ENCODE measurements at regions of chrX and their contacts with region 1.

Region 1: DNA sequence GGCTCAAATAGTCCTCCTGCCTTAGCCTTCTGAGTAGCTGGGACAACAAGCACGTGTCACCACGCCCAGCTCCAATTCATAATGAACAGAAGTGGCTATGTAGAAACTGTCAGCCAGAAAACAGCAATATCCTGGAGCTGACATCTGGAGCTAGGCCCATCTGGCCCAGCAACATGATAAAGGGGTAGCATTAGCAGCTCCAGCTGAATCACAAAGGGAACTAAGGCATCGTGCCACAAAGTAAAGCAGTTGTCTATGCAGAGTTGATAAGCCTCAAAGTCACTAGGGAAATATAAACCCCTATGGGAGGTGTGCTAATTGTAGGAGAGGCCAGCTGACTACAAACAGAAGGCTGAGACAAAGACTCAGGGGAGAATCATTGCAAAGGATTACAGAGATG is 270.5 kb upstream of the GPC4 start:
- DNase-seq: no peak
- H3K4me3 ChIP-seq: no peak overlapping the region
- H3K27ac ChIP-seq: no peak overlapping the region
- H3K4me1 ChIP-seq: no peaks in the 10 kb centered on the region
- H3K27me3 ChIP-seq: no peaks in the 10 kb centered on the region
- CTCF ChIP-seq: no peak

Region 2: DNA sequence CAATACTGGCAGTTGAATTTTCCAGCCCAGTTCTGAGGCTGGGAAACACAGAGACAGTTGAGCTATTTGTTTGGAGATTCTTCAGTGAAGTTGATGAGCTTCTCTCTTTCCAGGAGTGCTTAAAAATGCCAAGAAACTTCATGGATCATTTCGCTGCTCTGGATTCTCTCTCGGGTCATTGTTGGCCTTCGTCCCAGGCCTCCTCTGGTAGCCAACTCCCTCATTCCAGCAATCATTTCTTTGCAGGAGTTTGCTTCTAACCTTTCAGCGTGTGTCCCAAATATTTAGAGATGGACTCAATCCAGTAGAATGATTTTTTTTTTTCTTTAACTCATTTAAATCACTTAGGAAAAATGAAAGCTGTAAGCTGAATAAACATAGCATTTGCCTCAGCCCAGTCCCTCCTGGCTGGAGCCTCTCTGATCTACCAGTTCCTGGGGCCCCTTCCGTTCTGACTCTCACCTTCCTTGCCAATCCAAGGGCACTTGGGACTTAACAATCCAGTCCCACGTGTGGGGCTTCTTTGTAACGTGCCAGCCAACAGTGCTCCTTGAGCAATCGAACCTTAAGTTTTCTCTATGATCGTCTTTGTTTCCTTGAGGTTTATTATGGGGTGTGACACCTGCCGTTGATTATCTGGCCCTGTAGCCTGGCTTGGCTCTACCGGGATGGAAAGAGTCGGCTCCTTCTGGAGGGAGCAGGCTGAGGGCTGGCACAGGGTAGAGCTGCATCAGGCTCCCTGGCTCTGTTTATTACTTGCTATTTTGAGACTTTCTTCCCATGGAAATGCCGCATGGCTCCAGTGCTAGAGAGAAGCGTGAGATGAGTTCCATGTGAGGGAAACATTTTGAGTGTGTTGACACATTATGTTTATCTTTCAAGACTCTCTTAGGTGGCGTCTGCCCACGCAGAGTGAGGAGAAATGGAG is 190.1 kb before region 1 on chrX:
- CTCF ChIA-PET with region 1: interaction called, 11 read pairs
- dilution Hi-C with region 1: no loop called
- in situ Hi-C with region 1: no loop called
- intact Hi-C with region 1: no loop called
- DNase-seq: no peak
- H3K4me3 ChIP-seq: no peak overlapping the region
- H3K27ac ChIP-seq: no peak overlapping the region
- H3K4me1 ChIP-seq: no peaks in the 10 kb centered on the region
- H3K27me3 ChIP-seq: peaks cover 2% of the 10 kb centered on the region
- CTCF ChIP-seq: no peak

Region 3: DNA sequence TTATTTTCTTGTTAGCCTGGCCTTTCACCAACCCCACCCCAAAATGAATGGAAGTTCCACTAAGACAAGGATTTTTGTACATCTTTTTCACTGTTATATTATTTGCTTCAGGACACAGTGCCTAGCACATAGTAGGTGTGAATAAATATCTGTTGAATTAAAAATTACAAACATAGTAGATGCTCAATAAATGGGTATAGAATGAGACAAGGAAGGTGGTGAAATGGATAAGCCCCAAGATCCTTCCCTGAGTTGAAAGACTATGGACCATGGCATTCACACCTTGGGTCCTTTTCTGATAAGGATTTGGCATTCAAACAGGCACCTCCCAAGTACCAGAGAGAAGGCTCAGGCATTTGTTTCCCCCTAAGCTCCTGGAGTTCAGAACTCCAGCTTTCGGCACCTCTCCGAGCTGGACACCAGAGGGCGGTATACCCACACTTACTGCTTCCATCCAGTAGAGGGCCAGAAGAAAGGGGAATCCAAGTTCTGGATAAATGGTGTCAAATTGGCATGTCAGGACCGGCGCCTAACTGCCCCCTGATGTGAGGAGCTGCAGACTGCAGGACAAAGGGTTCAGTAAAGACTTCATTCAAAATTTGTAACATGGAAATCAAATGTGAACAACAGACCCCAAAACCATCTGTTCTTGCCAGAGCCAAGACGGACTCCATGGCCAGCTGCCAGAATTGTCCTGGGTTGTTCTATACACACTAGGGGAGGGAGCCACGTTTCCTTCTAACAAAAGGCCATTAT is 106.6 kb after region 1 on chrX:
- CTCF ChIA-PET with region 1: no interaction called
- dilution Hi-C with region 1: no loop called
- in situ Hi-C with region 1: no loop called
- intact Hi-C with region 1: no loop called
- DNase-seq: peak; percentile 61
- H3K4me3 ChIP-seq: peak overlapping the region in 2 of 3 experiments; percentile 19 to 23
- H3K27ac ChIP-seq: no peak overlapping the region
- H3K4me1 ChIP-seq: no peaks in the 10 kb centered on the region
- H3K27me3 ChIP-seq: peaks cover 2% of the 10 kb centered on the region
- CTCF ChIP-seq: peak; percentile 100